Activated CD8-positive, alpha-beta T cell treated with anti-CD3 and anti-CD28 coated beads, Interleukin-2, amount 10 ng/mL, durations not matched to agents 7 days and 5 days (primary cell): ENCODE measurements at regions of chr1 and their contacts with region 1.

Region 1: DNA sequence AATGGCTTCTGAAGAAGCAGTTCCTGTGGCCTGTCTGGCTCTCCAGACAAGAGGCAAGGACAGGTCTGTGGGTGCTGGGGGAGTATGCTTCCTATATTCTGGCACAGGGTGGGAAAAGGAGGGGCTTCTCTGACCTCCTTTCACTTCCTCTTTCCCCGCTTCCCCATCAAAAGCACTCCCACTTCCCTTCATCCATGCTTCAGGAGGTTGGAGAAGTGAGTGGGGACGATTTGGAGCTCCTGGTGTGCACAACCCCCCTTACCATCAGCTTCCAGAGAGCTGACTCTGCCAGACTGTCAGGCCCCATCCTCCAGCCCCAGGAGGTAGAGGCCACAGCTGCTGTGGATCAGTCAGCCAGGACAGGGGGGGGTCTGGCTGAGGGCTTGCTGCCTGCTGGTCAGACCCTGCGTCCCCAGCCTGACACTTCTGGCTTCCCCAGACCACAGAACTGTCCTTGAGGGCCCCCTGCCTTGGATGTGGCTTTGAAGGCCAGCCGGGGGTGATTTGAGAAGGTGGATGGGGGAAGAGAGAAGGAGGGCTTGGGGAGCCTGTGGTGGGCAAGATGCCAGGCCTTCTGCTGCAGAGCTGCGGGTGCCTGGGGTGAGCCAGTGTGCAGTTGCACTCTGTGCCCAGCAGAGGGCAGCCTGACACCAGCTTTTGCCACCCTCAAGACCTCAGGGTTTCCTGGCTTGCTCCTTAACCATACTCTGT is 21.5 kb upstream of the TMEM222 start:
- DNase-seq: peak; percentile 79
- ATAC-seq: peak; percentile 83
- H3K4me3 Mint-ChIP-seq: no peak overlapping the region
- H3K27ac Mint-ChIP-seq: no peak overlapping the region
- H3K4me1 Mint-ChIP-seq: peaks cover 9% of the 10 kb centered on the region
- H3K27me3 Mint-ChIP-seq: no peaks in the 10 kb centered on the region

Region 2: DNA sequence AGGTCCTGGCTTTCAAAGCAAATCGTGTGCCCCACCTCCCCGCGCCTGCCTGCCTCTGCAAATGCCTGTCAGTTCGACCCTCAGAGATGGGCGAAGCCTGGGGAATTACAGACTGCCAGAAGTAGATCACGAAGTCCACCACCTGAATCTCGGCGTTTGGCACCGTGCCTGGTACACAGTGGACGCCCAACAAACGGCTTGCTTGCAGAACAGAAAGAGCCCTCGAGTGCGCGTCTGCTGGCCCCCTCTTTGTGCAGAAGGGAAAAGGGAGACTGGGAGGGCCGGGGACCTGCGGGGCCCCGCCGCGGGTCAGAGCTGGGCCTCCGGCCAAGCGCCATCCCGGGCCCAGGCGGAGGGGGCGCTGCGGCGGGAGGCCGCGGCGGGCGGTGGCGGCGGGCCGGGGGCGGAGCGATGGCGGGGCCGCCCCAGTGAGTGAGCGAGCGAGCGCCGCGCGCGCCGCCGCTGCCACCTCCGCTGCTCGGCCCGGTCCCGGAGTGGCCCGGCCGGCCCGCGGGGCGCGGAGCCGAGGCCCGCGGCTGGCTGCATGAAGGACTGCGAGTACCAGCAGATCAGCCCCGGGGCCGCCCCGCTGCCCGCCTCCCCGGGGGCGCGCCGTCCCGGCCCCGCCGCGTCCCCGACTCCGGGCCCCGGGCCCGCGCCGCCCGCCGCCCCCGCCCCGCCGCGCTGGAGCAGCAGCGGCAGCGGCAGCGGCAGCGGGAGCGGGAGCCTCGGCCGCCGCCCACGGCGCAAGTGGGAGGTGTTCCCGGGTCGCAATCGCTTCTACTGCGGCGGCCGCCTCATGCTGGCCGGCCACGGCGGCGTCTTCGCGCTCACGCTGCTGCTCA is 474.0 kb before region 1 on chr1 and contains the start of gene ZDHHC18:
- CTCF ChIA-PET with region 1: no interaction called
- POLR2A ChIA-PET with region 1: no interaction called
- DNase-seq: peak; percentile 70
- ATAC-seq: peak; percentile 91
- H3K4me3 Mint-ChIP-seq: peak within 1 kb of the TSS; percentile 95
- H3K27ac Mint-ChIP-seq: peak within 1 kb of the TSS; percentile 92
- H3K4me1 Mint-ChIP-seq: peaks cover 55% of the 10 kb centered on the region
- H3K27me3 Mint-ChIP-seq: no peaks in the 10 kb centered on the region
- total RNA-seq, gene ZDHHC18: 47.6 to 50.9 TPM

Region 3: GRCh38 chr1:27111626-27112573 is 188.6 kb before region 1 on chr1:
- CTCF ChIA-PET with region 1: interaction called, 31 read pairs
- POLR2A ChIA-PET with region 1: no interaction called
- DNase-seq: peak; percentile 83
- ATAC-seq: peak; percentile 95
- H3K4me3 Mint-ChIP-seq: peak overlapping the region; percentile 59
- H3K27ac Mint-ChIP-seq: peak overlapping the region; percentile 91
- H3K4me1 Mint-ChIP-seq: peaks cover 76% of the 10 kb centered on the region
- H3K27me3 Mint-ChIP-seq: no peaks in the 10 kb centered on the region

Region 4: GRCh38 chr1:27257155-27257554 is 43.3 kb before region 1 on chr1:
- CTCF ChIA-PET with region 1: interaction called, 10 read pairs
- POLR2A ChIA-PET with region 1: no interaction called
- DNase-seq: no peak
- ATAC-seq: no peak
- H3K4me3 Mint-ChIP-seq: no peak overlapping the region
- H3K27ac Mint-ChIP-seq: no peak overlapping the region
- H3K4me1 Mint-ChIP-seq: peaks cover 20% of the 10 kb centered on the region
- H3K27me3 Mint-ChIP-seq: no peaks in the 10 kb centered on the region

Region 5: DNA sequence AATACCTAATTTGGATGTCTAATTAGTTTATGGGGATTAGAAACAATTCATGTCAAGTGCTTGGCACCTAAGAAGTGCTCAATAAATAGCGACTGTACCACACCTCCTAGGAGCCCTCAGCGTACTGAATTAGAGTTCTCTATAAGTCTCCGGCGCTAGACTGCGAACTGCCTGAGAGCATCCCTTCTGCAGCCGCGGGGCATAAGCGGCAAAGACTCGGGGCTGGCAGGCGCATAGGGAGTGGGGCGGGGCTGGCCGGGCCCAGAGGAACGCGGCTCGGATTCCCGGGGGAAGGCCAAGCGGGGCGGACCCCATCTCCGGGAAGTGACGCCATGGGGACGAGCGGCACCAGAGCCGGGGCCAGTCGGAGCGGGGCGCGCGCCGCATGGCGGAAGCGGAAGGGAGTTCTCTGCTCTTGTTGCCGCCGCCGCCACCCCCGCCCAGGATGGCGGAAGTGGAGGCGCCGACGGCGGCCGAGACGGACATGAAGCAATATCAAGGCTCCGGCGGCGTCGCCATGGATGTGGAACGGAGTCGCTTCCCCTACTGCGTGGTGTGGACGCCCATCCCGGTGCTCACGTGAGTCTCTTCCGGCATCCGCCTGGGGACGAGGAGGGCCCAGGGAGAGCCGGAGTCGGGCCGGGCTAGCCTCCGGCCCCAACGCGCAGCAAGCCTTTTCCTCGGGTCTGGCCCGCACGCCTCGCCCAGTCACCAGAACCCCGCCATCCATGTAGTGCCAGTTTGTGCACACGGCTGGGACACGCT is 21.5 kb after region 1 on chr1 and contains the start of gene TMEM222:
- CTCF ChIA-PET with region 1: interaction called, 14 read pairs
- POLR2A ChIA-PET with region 1: no interaction called
- DNase-seq: peak; percentile 97
- ATAC-seq: peak; percentile 97
- H3K4me3 Mint-ChIP-seq: peak within 1 kb of the TSS; percentile 98
- H3K27ac Mint-ChIP-seq: peak within 1 kb of the TSS; percentile 97
- H3K4me1 Mint-ChIP-seq: peaks cover 37% of the 10 kb centered on the region
- H3K27me3 Mint-ChIP-seq: peaks cover 4% of the 10 kb centered on the region
- total RNA-seq, gene TMEM222: 35.2 to 38.5 TPM

Region 6: DNA sequence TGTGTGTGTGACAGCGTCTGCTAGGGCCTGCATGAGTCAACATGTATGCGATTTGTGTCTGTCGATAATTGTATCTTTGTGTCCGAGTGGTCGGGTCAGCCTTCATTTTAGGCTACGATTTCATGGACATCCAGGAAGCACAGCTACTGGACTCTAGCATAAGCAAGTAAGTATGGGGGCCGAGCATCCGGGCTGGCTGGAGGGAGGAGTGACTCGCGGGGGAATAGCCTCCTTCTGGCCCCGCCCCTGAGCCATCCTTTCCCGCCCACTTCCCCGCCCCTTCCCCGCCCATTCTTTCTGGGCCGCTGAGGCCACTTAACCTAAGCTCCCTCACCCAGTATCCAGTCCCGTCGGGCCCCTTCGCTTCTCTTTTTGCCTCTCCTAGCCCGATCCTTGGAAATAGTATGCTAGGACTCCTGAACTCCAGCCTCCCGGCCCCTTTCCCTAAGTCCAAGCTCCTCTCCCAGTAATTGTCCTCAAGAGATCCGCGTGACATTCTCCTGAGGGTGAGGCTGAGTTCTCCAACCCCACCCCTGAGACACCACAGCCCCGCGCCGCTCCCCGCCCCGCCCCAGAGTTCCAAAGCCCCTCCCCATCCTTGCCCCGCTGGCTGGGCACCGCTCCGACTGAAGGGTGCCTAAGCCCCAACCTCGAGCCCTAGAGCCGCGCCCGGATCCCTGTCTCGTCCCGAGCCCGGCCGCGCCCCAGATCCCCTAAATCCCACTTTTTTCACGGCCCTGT is 65.0 kb after region 1 on chr1:
- CTCF ChIA-PET with region 1: interaction called, 24 read pairs
- POLR2A ChIA-PET with region 1: no interaction called
- DNase-seq: peak; percentile 88
- ATAC-seq: peak; percentile 74
- H3K4me3 Mint-ChIP-seq: peak overlapping the region; percentile 84
- H3K27ac Mint-ChIP-seq: peak overlapping the region; percentile 84
- H3K4me1 Mint-ChIP-seq: peaks cover 55% of the 10 kb centered on the region
- H3K27me3 Mint-ChIP-seq: no peaks in the 10 kb centered on the region

Region 7: GRCh38 chr1:27402349-27402754 is 101.9 kb after region 1 on chr1:
- CTCF ChIA-PET with region 1: interaction called, 266 read pairs
- POLR2A ChIA-PET with region 1: no interaction called
- DNase-seq: no peak
- ATAC-seq: no peak
- H3K4me3 Mint-ChIP-seq: no peak overlapping the region
- H3K27ac Mint-ChIP-seq: no peak overlapping the region
- H3K4me1 Mint-ChIP-seq: peaks cover 23% of the 10 kb centered on the region
- H3K27me3 Mint-ChIP-seq: no peaks in the 10 kb centered on the region